Calu3 (cell line): ENCODE measurements at regions of chr10 and their contacts with region 1.

Region 1: DNA sequence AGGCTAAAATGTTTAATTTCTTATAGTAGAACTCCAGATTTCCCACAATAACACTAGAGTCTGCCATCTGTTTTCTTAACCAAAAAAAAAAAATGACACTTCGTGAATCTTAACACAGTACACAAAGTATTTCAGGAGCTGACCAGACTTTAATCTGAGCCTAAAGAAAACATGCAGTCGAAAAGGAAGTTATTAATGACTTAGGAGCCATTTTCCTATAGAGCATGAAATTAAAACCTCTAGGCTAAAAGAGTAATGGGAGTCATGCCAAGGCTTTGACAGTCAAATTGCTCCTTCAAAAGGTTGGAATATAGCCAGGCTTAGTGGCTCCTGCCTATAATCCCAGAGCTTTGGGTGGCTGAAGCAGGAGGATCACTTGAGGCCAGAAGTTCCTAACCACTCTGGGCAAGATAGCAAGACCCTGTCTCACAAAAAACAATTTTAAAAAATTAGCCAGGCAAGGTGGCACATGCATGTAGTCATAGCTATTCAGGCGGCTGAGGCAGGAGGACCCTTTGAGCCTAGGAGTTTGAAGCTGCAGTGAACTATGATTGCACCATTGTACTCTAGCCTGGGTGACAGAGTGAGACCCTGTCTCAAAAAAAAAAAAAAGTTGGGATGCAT is 13.6 kb downstream of the MICU1 start:
- DNase-seq: no peak
- H3K4me3 Mint-ChIP-seq: no peak overlapping the region
- H3K27ac Mint-ChIP-seq: no peak overlapping the region
- H3K4me1 Mint-ChIP-seq: no peaks in the 10 kb centered on the region
- H3K27me3 Mint-ChIP-seq: no peaks in the 10 kb centered on the region
- CTCF ChIP-seq: no peak

Region 2: GRCh38 chr10:72563327-72563932 is 48.9 kb before region 1 on chr10:
- CTCF ChIA-PET with region 1: no interaction called
- intact Hi-C with region 1: no loop called
- DNase-seq: no peak
- H3K4me3 Mint-ChIP-seq: no peak overlapping the region
- H3K27ac Mint-ChIP-seq: no peak overlapping the region
- H3K4me1 Mint-ChIP-seq: peaks cover 12% of the 10 kb centered on the region
- H3K27me3 Mint-ChIP-seq: no peaks in the 10 kb centered on the region
- CTCF ChIP-seq: no peak

Region 3: DNA sequence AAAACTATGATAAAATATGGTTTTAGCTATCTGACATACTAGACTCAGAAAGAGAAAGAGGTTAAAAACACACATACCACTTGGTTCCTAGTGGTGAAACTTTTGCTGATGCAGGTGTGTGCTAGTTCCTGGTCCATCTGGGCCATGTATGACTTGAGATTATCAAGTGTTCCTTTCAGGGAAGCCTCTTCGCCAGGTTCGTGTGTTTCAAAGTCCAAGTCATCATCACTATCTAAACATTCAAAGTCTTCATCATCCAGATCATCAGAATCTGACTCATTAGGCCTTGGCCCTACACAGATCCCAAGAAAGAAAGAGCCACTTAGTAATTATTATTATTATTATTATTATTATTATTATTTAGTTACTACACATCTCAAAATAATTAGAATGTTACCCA is 524.3 kb after region 1 on chr10:
- CTCF ChIA-PET with region 1: interaction called, 12 read pairs
- intact Hi-C with region 1: no loop called
- DNase-seq: no peak
- H3K4me3 Mint-ChIP-seq: no peak overlapping the region
- H3K27ac Mint-ChIP-seq: no peak overlapping the region
- H3K4me1 Mint-ChIP-seq: no peaks in the 10 kb centered on the region
- H3K27me3 Mint-ChIP-seq: no peaks in the 10 kb centered on the region
- CTCF ChIP-seq: no peak